Calu3 (cell line): ENCODE measurements at regions of chr17 and their contacts with region 1.

Region 1: GRCh38 chr17:10646392-10646990 is 10.6 kb downstream of the MYH3 start:
- DNase-seq: peak; percentile 70
- H3K4me3 Mint-ChIP-seq: no peak overlapping the region
- H3K27ac Mint-ChIP-seq: no peak overlapping the region
- H3K4me1 Mint-ChIP-seq: no peaks in the 10 kb centered on the region
- H3K27me3 Mint-ChIP-seq: no peaks in the 10 kb centered on the region
- CTCF ChIP-seq: peak; percentile 62

Region 2: DNA sequence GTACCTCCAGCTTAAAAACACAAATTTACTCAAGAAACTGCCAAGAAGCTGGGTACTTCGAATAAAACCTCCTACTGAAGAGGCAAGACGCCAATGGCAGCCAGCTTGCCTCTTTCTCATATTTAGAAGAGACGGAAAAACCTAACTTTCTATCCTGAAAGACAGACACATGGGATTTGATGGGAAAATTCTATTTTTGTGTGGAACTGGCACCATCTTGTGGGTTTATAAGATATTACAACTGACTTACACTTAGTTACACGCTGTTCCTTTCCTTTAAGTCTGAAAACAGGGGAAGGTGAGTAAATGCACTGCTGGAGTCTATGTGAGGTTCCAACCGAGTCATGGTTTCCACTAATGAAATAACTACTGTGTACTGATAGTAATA is 1340.4 kb after region 1 on chr17:
- CTCF ChIA-PET with region 1: no interaction called
- intact Hi-C with region 1: loop called (anchors 10 kb)
- DNase-seq: peak; percentile 3
- H3K4me3 Mint-ChIP-seq: no peak overlapping the region
- H3K27ac Mint-ChIP-seq: no peak overlapping the region
- H3K4me1 Mint-ChIP-seq: no peaks in the 10 kb centered on the region
- H3K27me3 Mint-ChIP-seq: no peaks in the 10 kb centered on the region
- CTCF ChIP-seq: no peak